Dorsolateral prefrontal cortex (tissue), 120 donors: ENCODE measurements at regions of chr11 and their contacts with region 1.

Region 1: DNA sequence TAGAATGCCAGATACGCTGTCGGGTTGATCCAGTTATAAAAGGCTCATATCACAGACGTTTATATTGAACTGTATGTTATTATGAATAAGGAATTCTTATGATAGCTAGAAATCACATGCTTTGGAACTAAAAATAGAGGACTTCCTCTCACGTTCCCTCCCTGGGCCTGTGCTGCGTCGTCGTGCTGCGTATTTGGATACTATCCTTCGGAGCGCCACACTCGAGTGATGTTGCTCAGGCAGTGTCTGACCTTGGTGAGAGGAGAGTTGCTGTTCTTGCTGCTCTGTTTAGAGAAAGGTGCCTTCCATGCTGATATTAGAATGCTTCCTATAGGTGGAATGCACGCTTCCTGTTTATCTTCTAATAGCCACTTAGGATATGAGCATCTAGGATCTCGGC is 20.2 kb upstream of the ST14 start:
- DNase-seq: no peak
- H3K4me3 ChIP-seq: no peak overlapping the region
- H3K27ac ChIP-seq: peak overlapping the region in 54 of 59 donors; percentile 0 to 81 (median 54)
- H3K27me3 ChIP-seq: no peaks in the 10 kb centered on the region
- CTCF ChIP-seq: no peak

Region 2: GRCh38 chr11:129930296-129930695 is 209.1 kb before region 1 on chr11:
- intact Hi-C with region 1: loop called in 1 of 2 experiments (anchors 2 kb)
- DNase-seq: peak in 1 of 10 donors; percentile 49
- H3K4me3 ChIP-seq: no peak overlapping the region
- H3K27ac ChIP-seq: peak overlapping the region in 1 of 59 donors; percentile 44
- H3K27me3 ChIP-seq: no peaks in the 10 kb centered on the region
- CTCF ChIP-seq: no peak